HCT116 (cell line): ENCODE measurements at regions of chr5 and their contacts with region 1.

Region 1: GRCh38 chr5:121962347-121962670 is 534 bp downstream of the SRFBP1 start:
- DNase-seq: no peak
- ATAC-seq: no peak
- H3K4me3 ChIP-seq: peak overlapping the region; percentile 71 to 88
- H3K27ac ChIP-seq: peak overlapping the region; percentile 46
- H3K4me1 ChIP-seq: peaks cover 7 to 17% of the 10 kb centered on the region in 2 experiments; a peak in 3 of 4 replicates
- H3K27me3 ChIP-seq: no peaks in the 10 kb centered on the region
- CTCF ChIP-seq: no peak
- POLR2A ChIP-seq: no peak
- RAD21 ChIP-seq: no peak

Region 2: GRCh38 chr5:121668635-121669034 is 293.7 kb before region 1 on chr5:
- CTCF ChIA-PET with region 1: no interaction called
- POLR2A ChIA-PET with region 1: no interaction called
- RAD21 ChIA-PET with region 1: no interaction called
- intact Hi-C with region 1: no loop called
- DNase-seq: peak; percentile 7
- ATAC-seq: no peak; the same call in 1 of the 2 replicates
- H3K4me3 ChIP-seq: no peak overlapping the region
- H3K27ac ChIP-seq: no peak overlapping the region
- H3K4me1 ChIP-seq: peaks cover 0 to 5% of the 10 kb centered on the region in 2 experiments; a peak in 1 of 4 replicates
- H3K27me3 ChIP-seq: no peaks in the 10 kb centered on the region
- CTCF ChIP-seq: no peak
- POLR2A ChIP-seq: no peak
- RAD21 ChIP-seq: no peak

Region 3: DNA sequence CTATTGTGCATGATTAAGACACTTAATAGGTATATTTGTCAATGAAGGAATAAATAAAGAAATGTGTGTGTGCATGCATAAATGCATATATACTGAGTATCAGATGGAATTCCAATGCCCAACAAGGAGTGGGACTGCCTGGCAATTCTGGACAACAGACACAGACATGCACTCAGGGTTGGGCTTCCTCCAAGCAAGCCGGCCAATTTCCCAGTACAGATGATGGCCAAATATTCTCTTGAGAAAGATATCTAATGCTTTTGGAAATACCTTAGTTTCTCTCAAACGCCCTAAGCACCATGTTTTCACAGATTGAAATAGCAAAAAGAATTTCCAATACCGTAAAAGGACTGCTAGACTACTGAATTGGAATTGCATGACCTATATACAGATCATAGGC is 99.5 kb before region 1 on chr5:
- CTCF ChIA-PET with region 1: no interaction called
- POLR2A ChIA-PET with region 1: no interaction called
- RAD21 ChIA-PET with region 1: no interaction called
- intact Hi-C with region 1: no loop called
- DNase-seq: no peak
- ATAC-seq: no peak
- H3K4me3 ChIP-seq: no peak overlapping the region
- H3K27ac ChIP-seq: no peak overlapping the region
- H3K4me1 ChIP-seq: no peaks in the 10 kb centered on the region
- H3K27me3 ChIP-seq: no peaks in the 10 kb centered on the region
- CTCF ChIP-seq: no peak
- POLR2A ChIP-seq: no peak
- RAD21 ChIP-seq: no peak

Region 4: DNA sequence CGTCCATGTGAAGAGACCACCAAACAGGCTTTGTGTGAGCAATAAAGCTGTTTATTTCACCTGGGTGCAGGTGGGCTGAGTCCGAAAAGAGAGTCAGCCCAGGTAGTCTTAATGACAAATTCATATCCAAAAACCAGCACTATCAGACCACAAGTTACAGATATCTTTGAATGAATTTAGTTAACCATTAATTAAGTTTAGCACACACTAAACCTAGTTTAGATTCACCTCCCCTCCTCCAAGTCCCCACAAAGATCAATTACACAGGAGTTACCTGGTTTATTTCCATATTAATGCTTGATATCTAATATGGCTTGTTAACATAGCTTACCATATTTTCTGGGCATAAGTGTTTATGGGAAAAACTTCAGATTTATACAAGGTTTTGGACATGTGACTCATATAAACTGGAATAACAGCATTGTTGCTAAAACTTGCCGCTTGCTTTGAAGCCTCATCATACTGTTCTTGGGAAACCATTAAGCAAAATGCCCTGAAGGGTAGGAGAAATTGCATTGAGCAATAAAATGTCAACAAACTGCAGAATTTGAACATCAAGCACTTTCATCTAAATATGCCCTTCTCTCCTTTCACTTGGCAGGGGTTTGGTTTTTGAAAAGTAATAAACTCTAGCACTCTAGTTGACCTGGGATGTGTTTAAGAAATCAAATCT is 516.6 kb after region 1 on chr5:
- CTCF ChIA-PET with region 1: no interaction called
- POLR2A ChIA-PET with region 1: no interaction called
- RAD21 ChIA-PET with region 1: no interaction called
- intact Hi-C with region 1: loop called (anchors 2 kb)
- DNase-seq: peak; percentile 10
- ATAC-seq: no peak
- H3K4me3 ChIP-seq: no peak overlapping the region
- H3K27ac ChIP-seq: no peak overlapping the region; the same call in 1 of the 2 replicates
- H3K4me1 ChIP-seq: peaks cover 6 to 20% of the 10 kb centered on the region in 2 experiments; a peak in 3 of 4 replicates
- H3K27me3 ChIP-seq: no peaks in the 10 kb centered on the region
- CTCF ChIP-seq: no peak
- POLR2A ChIP-seq: no peak
- RAD21 ChIP-seq: no peak